ENCODE measurements at regions of chr16 and their contacts with region 1.

Region 1: GRCh38 chr16:24504472-24505345 is 34.7 kb upstream of the RBBP6 start:
- DNase-seq: peak; percentile 59
- H3K27ac ChIP-seq: no peak overlapping the region
- CTCF ChIP-seq: peak; percentile 81

Region 2: DNA sequence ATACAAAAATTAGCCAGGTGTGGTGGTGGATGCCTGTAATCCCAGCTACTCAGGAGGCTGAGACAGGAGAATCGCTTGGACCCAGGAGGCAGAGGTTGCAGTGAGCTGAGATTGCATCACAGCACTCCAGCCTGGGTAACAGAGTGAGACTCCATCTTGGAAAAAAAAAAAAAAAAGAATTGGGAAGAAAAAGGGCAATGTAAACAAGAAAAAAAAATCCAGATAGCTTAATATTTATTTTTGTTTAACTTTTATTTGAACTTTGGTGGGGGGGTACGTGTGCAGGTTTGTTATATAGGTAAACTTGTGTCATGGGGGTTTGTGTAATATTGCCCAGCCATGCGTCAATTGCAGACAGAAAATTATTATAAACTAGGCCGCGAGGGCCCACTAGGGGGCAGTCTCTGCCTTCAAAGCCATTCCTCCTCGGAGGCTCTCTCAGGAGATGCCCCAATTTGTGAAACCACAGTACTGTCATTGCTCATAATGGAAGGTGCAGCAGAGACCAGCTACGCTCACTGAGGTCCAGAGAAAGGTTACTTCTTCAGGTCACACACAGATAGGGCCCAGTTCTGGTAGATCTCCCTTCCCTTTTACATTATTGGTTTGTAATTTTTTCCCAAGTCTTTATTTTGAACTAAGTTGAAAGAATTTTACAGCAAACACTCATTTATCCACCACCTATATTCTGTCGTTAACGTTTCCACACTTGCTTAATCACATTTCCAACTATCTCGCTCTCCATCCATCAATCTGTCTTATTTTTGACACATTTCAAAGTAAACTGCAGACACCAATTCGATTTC is 462.7 kb before region 1 on chr16:
- CTCF ChIA-PET with region 1: interaction called, 25 read pairs
- POLR2A ChIA-PET with region 1: no interaction called
- DNase-seq: peak; percentile 73
- H3K27ac ChIP-seq: no peak overlapping the region
- CTCF ChIP-seq: peak; percentile 67

Region 3: GRCh38 chr16:24054741-24055491 is 449.8 kb before region 1 on chr16:
- CTCF ChIA-PET with region 1: interaction called, 12 read pairs
- POLR2A ChIA-PET with region 1: no interaction called
- DNase-seq: no peak
- H3K27ac ChIP-seq: no peak overlapping the region
- CTCF ChIP-seq: no peak

Region 4: DNA sequence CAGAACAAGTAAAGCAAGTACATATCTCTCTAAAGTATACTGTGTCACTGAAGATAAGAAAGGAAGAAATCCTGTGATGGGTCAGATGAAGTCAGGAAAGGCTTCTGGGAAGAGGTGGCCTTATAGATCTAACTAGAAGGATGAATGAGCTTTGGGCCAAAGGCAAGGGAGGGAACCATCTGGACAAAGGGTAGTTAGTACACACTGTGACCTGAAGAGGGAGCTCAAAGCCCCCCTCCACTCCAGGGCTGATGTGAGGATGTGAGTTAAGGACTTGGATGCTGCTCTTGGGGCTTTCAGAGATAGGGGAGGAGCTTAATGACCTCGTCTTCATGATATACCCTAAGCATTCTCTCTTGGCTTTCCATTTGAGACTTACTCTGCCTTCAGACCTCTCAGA is 433.9 kb before region 1 on chr16:
- CTCF ChIA-PET with region 1: interaction called, 11 read pairs
- POLR2A ChIA-PET with region 1: no interaction called
- DNase-seq: peak; percentile 45
- H3K27ac ChIP-seq: no peak overlapping the region
- CTCF ChIP-seq: no peak

Measured in RWPE1 (cell line).